OCI-LY7 (cell line): ENCODE measurements at regions of chr3 and their contacts with region 1.

Region 1: DNA sequence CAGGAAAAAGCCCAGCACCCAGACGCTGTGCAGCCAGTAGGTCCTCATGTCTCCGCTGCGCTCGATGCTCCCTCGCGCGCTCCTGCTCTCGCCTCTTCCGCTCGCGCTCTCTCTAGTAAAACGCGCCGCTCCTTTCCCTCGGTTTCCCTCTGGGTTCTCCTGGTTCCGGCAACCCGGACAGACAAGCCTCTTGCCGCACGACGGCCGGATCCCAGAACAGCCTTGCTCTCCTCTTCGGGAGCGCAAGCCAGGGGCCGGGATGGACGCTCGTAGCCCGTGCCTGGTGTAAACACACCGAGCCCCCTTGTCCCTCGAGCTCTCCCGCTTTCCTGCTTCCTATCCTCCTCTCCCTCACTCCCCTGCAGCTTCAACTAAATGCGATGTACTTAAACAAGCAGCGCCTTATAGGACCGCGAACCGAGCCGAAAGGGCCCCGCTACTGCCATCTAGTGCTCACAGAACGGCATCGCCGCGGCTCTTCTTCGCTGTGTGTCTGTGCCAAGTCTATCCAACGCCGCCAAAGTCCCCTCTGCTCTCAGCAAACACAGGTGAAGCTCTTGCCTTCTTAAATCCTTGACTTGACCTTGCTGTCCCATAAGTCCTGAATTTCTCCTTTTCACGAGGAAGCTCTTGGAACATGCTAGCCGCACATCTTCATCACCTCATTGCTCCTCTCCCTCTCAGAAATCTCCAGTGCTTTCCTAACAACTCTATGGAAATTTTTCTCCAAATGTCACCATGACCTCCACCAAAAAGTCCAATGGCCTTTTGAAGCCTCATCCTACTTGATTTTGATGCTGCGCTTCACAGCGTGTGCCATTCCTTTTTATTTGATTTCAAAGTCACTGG is 1037.2 kb downstream of the IGSF11 start:
- DNase-seq: peak; percentile 80
- H3K4me3 ChIP-seq: peak overlapping the region; percentile 67
- H3K27ac ChIP-seq: no peak overlapping the region
- H3K4me1 ChIP-seq: no peaks in the 10 kb centered on the region
- CTCF ChIP-seq: peak; percentile 87

Region 2: GRCh38 chr3:116770815-116771450 is 1226.5 kb before region 1 on chr3:
- CTCF ChIA-PET with region 1: no interaction called
- POLR2A ChIA-PET with region 1: no interaction called
- intact Hi-C with region 1: loop called (anchors 1 kb)
- DNase-seq: peak; percentile 58
- H3K4me3 ChIP-seq: no peak overlapping the region
- H3K27ac ChIP-seq: no peak overlapping the region
- H3K4me1 ChIP-seq: no peaks in the 10 kb centered on the region
- CTCF ChIP-seq: peak; percentile 85

Region 3: DNA sequence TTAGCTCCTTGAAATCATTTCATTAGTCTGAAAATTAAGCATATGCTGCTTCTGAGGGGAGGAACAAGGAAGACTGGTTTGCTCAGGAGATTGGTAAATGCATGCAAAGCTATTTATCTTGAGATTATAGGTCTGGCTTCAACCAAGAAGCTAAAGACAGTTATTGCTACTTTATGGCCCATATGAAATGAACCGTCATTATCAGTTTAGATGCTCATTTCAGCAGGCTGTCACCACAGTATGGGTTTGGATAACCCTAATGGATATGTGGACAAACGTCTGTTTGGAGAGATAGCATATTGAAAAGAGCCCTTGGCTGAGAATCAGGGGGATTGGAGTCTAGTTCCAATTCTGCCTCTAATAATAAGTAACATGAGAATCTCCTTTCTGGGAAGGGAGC is 365.2 kb before region 1 on chr3:
- CTCF ChIA-PET with region 1: interaction called, 21 read pairs
- POLR2A ChIA-PET with region 1: interaction called, 4 read pairs
- intact Hi-C with region 1: no loop called
- DNase-seq: no peak
- H3K4me3 ChIP-seq: no peak overlapping the region
- H3K27ac ChIP-seq: no peak overlapping the region
- H3K4me1 ChIP-seq: no peaks in the 10 kb centered on the region
- CTCF ChIP-seq: no peak

Region 4: DNA sequence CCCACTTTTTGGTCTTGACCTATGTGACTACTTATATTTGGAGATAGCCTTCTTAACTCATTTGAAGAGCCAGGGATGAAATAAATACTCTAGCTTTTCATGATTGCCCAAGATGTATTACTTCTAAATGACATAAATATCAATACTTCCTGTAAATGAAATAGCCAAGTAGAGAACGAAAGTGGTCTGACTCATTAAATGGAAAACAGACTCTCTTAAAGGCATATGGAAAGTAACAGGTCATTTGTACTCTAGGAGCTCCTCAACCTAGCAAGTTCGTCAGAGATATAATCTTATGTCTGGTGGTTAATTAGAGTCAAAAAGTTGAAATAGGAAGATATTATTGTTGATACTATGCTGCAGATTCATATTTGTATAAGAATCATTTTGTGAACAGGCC is 182.4 kb before region 1 on chr3:
- CTCF ChIA-PET with region 1: no interaction called
- POLR2A ChIA-PET with region 1: no interaction called
- intact Hi-C with region 1: loop called (anchors 5 kb)
- DNase-seq: no peak
- H3K4me3 ChIP-seq: no peak overlapping the region
- H3K27ac ChIP-seq: no peak overlapping the region
- H3K4me1 ChIP-seq: no peaks in the 10 kb centered on the region
- CTCF ChIP-seq: no peak

Region 5: GRCh38 chr3:117977504-117978228 is 19.8 kb before region 1 on chr3:
- CTCF ChIA-PET with region 1: interaction called, 3 read pairs
- POLR2A ChIA-PET with region 1: interaction called, 16 read pairs
- intact Hi-C with region 1: no loop called
- DNase-seq: no peak
- H3K4me3 ChIP-seq: no peak overlapping the region
- H3K27ac ChIP-seq: no peak overlapping the region
- H3K4me1 ChIP-seq: peaks cover 38% of the 10 kb centered on the region
- CTCF ChIP-seq: no peak